ENCODE measurements at regions of chr2 and their contacts with region 1.

Region 1: GRCh38 chr2:69694894-69695849 is 46.8 kb upstream of the ANXA4 start:
- DNase-seq: no peak
- H3K4me3 Mint-ChIP-seq: no peak overlapping the region
- H3K27ac Mint-ChIP-seq: peak overlapping the region; percentile 78
- H3K4me1 Mint-ChIP-seq: peaks cover 51% of the 10 kb centered on the region
- H3K27me3 Mint-ChIP-seq: no peaks in the 10 kb centered on the region

Region 2: GRCh38 chr2:69634196-69634821 is 60.9 kb before region 1 on chr2:
- intact Hi-C with region 1: no loop called
- DNase-seq: no peak
- H3K4me3 Mint-ChIP-seq: no peak overlapping the region
- H3K27ac Mint-ChIP-seq: peak overlapping the region; percentile 45
- H3K4me1 Mint-ChIP-seq: peaks cover 48% of the 10 kb centered on the region
- H3K27me3 Mint-ChIP-seq: no peaks in the 10 kb centered on the region

Region 3: DNA sequence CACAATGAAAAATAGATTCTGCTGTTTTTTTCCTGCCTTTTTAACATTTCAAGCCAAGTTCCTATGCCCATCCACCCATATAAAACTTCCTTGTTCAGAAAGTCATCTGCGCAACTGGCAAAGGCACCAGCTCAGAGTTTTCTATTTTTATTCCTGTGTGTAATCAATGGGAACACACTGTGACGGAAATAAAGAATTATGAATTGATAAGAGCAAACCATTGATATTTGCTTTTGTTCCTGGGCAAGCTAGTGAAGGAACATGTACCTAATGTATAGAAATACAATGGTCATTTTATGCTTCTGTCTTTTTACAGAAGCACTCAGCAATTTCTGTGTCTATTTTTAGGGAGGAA is 20.9 kb before region 1 on chr2:
- intact Hi-C with region 1: loop called (anchors 1 kb)
- DNase-seq: no peak
- H3K4me3 Mint-ChIP-seq: no peak overlapping the region
- H3K27ac Mint-ChIP-seq: peak overlapping the region; percentile 34
- H3K4me1 Mint-ChIP-seq: peaks cover 19% of the 10 kb centered on the region
- H3K27me3 Mint-ChIP-seq: no peaks in the 10 kb centered on the region

Region 4: DNA sequence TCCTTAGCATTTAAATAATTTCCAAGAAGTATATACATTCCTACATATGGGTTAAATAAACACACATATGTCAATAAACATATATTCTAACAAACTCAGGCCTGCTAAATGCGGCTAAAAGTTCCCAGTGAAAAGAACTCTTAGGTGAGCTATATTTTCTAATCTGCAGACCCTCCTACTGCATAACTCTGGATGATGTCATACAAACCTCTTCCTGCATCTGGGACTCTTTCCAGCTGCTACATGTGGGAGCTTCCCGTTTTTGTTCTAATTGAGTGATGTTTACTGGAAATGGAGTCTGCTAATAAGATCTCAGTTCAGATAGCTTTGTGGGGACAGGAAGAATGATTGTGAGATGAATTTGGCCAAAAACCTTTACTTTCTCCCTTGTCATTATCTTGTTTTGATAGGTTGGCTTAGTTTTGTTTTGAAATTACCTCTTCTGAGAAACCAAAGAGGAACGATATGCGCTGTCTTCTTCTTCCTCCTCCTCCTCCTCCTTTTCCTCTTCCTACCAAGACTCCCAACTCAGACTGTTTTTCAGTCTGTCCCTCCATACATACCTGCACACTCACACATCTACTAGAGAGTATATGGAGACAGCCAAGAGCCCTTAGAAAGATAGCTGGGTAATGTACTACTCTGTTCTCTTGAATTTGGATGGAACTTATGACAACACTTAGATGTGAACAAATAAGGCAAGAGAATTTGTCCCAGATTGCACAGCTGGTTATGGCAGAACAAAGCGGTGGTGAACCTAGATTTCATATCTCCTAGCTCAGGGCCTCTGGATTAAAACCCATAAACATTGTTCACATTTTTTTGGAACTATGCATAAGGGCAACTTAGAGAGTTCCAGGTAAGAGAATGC is 11.8 kb before region 1 on chr2:
- intact Hi-C with region 1: loop called (anchors 1 kb)
- DNase-seq: no peak
- H3K4me3 Mint-ChIP-seq: peak overlapping the region; percentile 63
- H3K27ac Mint-ChIP-seq: peak overlapping the region; percentile 86
- H3K4me1 Mint-ChIP-seq: peaks cover 55% of the 10 kb centered on the region
- H3K27me3 Mint-ChIP-seq: peaks cover 2% of the 10 kb centered on the region

Region 5: DNA sequence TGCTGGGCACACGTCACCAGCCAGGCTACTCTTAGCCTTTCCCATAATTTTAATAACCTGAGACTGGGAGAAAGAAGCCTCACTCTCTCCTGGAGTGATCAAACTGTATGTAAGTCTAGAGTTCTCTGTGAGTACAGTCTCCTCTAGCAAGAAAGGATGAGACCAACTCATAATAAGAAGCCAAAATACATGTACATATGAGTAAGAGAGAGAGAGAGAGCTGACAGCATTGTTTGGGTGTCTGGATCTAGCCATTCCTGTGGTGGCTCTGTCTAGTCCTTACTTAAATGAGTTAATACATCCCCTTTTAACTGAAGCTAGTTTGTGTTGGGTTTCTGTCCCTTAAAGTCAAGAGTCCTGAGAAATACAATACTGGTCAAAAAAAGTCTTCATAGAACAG is 20.8 kb after region 1 on chr2:
- intact Hi-C with region 1: loop called (anchors 2 kb)
- DNase-seq: no peak
- H3K4me3 Mint-ChIP-seq: no peak overlapping the region
- H3K27ac Mint-ChIP-seq: peak overlapping the region; percentile 1
- H3K4me1 Mint-ChIP-seq: peaks cover 17% of the 10 kb centered on the region
- H3K27me3 Mint-ChIP-seq: peaks cover 3% of the 10 kb centered on the region

Measured in activated CD4-positive, alpha-beta T cell treated with anti-CD3 and anti-CD28 coated beads, Interleukin-2, amount 10 ng/mL, durations not matched to agents 24 days and 14 days (primary cell).